B cell (primary cell): ENCODE measurements at regions of chr19 and their contacts with region 1.

Region 1: GRCh38 chr19:38049105-38049649 is 142.2 kb downstream of the SIPA1L3 start:
- DNase-seq: peak; percentile 85
- ATAC-seq: peak; percentile 35
- H3K4me3 ChIP-seq: peak overlapping the region in 4 of 5 experiments; percentile 2 to 39 (median 26)
- H3K4me3 Mint-ChIP-seq: peak overlapping the region; percentile 77
- H3K27ac ChIP-seq: peak overlapping the region; percentile 97
- H3K27ac Mint-ChIP-seq: peak overlapping the region; percentile 96
- H3K4me1 ChIP-seq: peaks cover 52 to 68% of the 10 kb centered on the region in 2 donors
- H3K4me1 Mint-ChIP-seq: peaks cover 75% of the 10 kb centered on the region
- H3K27me3 ChIP-seq: no peaks in the 10 kb centered on the region
- H3K27me3 Mint-ChIP-seq: no peaks in the 10 kb centered on the region
- CTCF ChIP-seq: no peak

Region 2: DNA sequence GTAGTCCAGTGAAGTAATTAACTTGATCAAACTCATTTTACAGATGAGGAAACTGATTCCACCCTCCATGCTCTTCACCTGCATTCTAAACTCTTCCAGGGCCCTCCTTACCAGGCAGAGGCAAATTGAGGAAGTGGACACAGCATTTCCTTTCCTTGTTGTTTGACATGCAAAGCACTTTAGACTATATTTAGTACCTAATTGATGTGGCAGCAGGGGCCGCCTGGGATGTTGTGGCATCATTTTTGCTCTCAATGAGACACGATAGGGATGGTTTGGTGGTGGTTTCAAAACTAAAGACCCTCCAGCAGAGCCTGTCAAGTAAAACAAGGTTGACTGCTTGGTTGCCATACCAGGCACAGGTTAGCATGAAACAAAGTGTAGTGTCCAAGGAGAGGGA is 134.3 kb before region 1 on chr19:
- CTCF ChIA-PET with region 1: interaction called, 4 read pairs
- POLR2A ChIA-PET with region 1: interaction called, 5 read pairs
- intact Hi-C with region 1: loop called (anchors 2 kb)
- DNase-seq: peak; percentile 75
- ATAC-seq: peak; percentile 70
- H3K4me3 ChIP-seq: peak overlapping the region; percentile 16 to 43 (median 34)
- H3K4me3 Mint-ChIP-seq: peak overlapping the region; percentile 44
- H3K27ac ChIP-seq: peak overlapping the region; percentile 76 to 84
- H3K27ac Mint-ChIP-seq: peak overlapping the region; percentile 61
- H3K4me1 ChIP-seq: peaks cover 85 to 87% of the 10 kb centered on the region in 2 donors
- H3K4me1 Mint-ChIP-seq: peaks cover 71% of the 10 kb centered on the region
- H3K27me3 ChIP-seq: no peaks in the 10 kb centered on the region
- H3K27me3 Mint-ChIP-seq: no peaks in the 10 kb centered on the region
- CTCF ChIP-seq: no peak

Region 3: GRCh38 chr19:37963190-37963936 is 85.8 kb before region 1 on chr19:
- CTCF ChIA-PET with region 1: interaction called, 3 read pairs
- POLR2A ChIA-PET with region 1: interaction called, 6 read pairs
- intact Hi-C with region 1: loop called (anchors 5 kb)
- DNase-seq: no peak
- ATAC-seq: no peak
- H3K4me3 ChIP-seq: no peak overlapping the region
- H3K4me3 Mint-ChIP-seq: peak overlapping the region; percentile 29
- H3K27ac ChIP-seq: peak overlapping the region; percentile 69 to 77
- H3K27ac Mint-ChIP-seq: peak overlapping the region; percentile 91
- H3K4me1 ChIP-seq: peaks cover 58 to 72% of the 10 kb centered on the region in 2 donors
- H3K4me1 Mint-ChIP-seq: peaks cover 71% of the 10 kb centered on the region
- H3K27me3 ChIP-seq: no peaks in the 10 kb centered on the region
- H3K27me3 Mint-ChIP-seq: no peaks in the 10 kb centered on the region
- CTCF ChIP-seq: no peak

Region 4: GRCh38 chr19:38004521-38005223 is 44.5 kb before region 1 on chr19:
- CTCF ChIA-PET with region 1: interaction called, 3 read pairs
- POLR2A ChIA-PET with region 1: interaction called, 12 read pairs
- intact Hi-C with region 1: loop called (anchors 1 kb)
- DNase-seq: peak; percentile 79
- ATAC-seq: peak; percentile 45
- H3K4me3 ChIP-seq: peak overlapping the region in 4 of 5 experiments; percentile 5 to 55 (median 50)
- H3K4me3 Mint-ChIP-seq: no peak overlapping the region
- H3K27ac ChIP-seq: peak overlapping the region; percentile 85 to 92
- H3K27ac Mint-ChIP-seq: no peak overlapping the region
- H3K4me1 ChIP-seq: peaks cover 73 to 83% of the 10 kb centered on the region in 2 donors
- H3K4me1 Mint-ChIP-seq: peaks cover 35% of the 10 kb centered on the region
- H3K27me3 ChIP-seq: no peaks in the 10 kb centered on the region
- H3K27me3 Mint-ChIP-seq: no peaks in the 10 kb centered on the region
- CTCF ChIP-seq: no peak

Region 5: DNA sequence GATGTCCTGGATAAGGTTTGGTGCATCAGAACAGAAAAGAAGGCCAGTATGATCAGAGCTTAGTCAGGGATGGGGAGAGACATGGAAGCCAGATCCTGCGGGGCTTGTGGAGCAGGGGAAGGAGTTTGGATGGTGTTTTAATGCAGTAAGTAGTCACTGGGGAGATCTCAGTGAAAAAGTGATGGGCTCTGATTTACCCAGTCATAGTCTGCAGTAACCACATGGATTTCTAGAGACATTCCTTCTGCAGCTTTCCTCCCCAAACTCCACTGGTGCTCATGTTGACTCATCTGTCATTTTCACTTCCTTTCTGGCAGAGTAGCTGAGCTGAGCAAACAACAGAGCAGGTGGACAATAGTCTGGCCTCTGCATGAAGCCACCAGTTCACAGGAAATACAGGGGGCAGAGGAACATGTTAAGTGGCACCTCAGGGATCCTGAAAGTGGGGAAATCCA is 30.8 kb after region 1 on chr19:
- CTCF ChIA-PET with region 1: interaction called, 6 read pairs
- POLR2A ChIA-PET with region 1: interaction called, 6 read pairs
- intact Hi-C with region 1: loop called (anchors 1 kb)
- DNase-seq: peak; percentile 48
- ATAC-seq: peak; percentile 83
- H3K4me3 ChIP-seq: no peak overlapping the region
- H3K4me3 Mint-ChIP-seq: peak overlapping the region; percentile 33
- H3K27ac ChIP-seq: peak overlapping the region; percentile 41 to 64
- H3K27ac Mint-ChIP-seq: peak overlapping the region; percentile 88
- H3K4me1 ChIP-seq: peaks cover 18 to 23% of the 10 kb centered on the region in 2 donors
- H3K4me1 Mint-ChIP-seq: peaks cover 22% of the 10 kb centered on the region
- H3K27me3 ChIP-seq: no peaks in the 10 kb centered on the region
- H3K27me3 Mint-ChIP-seq: no peaks in the 10 kb centered on the region
- CTCF ChIP-seq: no peak

Region 6: GRCh38 chr19:38250821-38251563 is 201.8 kb after region 1 on chr19:
- CTCF ChIA-PET with region 1: no interaction called
- POLR2A ChIA-PET with region 1: interaction called, 11 read pairs
- intact Hi-C with region 1: no loop called
- DNase-seq: no peak
- ATAC-seq: no peak
- H3K4me3 ChIP-seq: no peak overlapping the region
- H3K4me3 Mint-ChIP-seq: peak overlapping the region; percentile 69
- H3K27ac ChIP-seq: no peak overlapping the region
- H3K27ac Mint-ChIP-seq: peak overlapping the region; percentile 91
- H3K4me1 ChIP-seq: peaks cover 48 to 51% of the 10 kb centered on the region in 2 donors
- H3K4me1 Mint-ChIP-seq: peaks cover 53% of the 10 kb centered on the region
- H3K27me3 ChIP-seq: no peaks in the 10 kb centered on the region
- H3K27me3 Mint-ChIP-seq: no peaks in the 10 kb centered on the region
- CTCF ChIP-seq: no peak